Breast epithelium (tissue), 4 donors: ENCODE measurements at regions of chr11 and their contacts with region 1.

Region 1: GRCh38 chr11:123407130-123407995 is 22.7 kb upstream of the GRAMD1B start:
- DNase-seq: peak in 1 of 2 donors; percentile 68
- H3K4me3 ChIP-seq: no peak overlapping the region
- H3K27ac ChIP-seq: no peak overlapping the region
- H3K4me1 ChIP-seq: no peaks in the 10 kb centered on the region
- H3K27me3 ChIP-seq: no peaks in the 10 kb centered on the region
- CTCF ChIP-seq: peak; percentile 25 to 72 (median 65)
- POLR2A ChIP-seq: no peak

Region 2: DNA sequence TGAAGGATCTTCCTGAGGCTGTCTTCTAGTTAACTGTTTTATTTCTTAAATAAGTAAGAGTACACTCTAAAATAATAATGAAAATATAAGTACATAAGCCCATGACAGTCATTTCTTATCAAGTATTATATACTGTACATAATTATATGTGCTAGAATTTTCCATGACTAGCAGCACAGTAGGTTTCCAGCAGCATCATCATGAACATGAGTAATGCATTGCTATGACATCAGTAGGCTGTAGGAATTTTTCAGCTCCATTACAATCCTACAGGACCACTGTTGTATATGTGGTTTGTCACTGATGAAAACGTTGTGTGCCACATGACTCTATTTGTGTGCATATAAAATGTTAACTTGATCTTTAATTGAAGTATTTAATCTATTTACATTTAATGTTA is 312.1 kb after region 1 on chr11:
- intact Hi-C with region 1: no loop called
- DNase-seq: no peak
- H3K4me3 ChIP-seq: no peak overlapping the region
- H3K27ac ChIP-seq: no peak overlapping the region
- H3K4me1 ChIP-seq: no peaks in the 10 kb centered on the region
- H3K27me3 ChIP-seq: no peaks in the 10 kb centered on the region
- CTCF ChIP-seq: no peak
- POLR2A ChIP-seq: no peak

Region 3: DNA sequence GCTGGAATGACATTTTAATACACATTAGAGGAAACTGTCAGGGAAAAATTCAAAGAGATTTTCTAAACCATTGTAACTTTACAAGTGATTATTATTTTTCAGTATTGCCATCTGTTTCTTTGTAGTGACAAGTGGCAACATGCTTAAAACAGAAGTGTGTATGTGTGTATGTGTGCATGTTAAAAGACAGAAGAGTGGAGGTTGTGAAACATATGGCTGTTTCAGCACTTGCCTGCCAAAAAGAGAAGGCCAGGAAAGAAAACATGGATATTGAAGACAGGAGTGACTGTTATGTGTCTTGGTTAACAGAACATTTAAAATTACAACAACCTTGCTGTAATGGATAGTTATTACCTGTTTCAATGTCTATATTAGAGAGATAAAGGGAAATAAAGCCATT is 683.6 kb after region 1 on chr11:
- intact Hi-C with region 1: loop called (anchors 10 kb)
- DNase-seq: no peak
- H3K4me3 ChIP-seq: no peak overlapping the region
- H3K27ac ChIP-seq: no peak overlapping the region
- H3K4me1 ChIP-seq: no peaks in the 10 kb centered on the region
- H3K27me3 ChIP-seq: no peaks in the 10 kb centered on the region
- CTCF ChIP-seq: no peak
- POLR2A ChIP-seq: no peak